ENCODE measurements at regions of chr1 and their contacts with region 1.

Region 1: GRCh38 chr1:238647877-238648276 is 738.5 kb upstream of the CHRM3 start:
- DNase-seq: no peak
- H3K4me3 ChIP-seq: no peak overlapping the region
- H3K27ac ChIP-seq: no peak overlapping the region
- H3K4me1 ChIP-seq: no peaks in the 10 kb centered on the region
- H3K27me3 ChIP-seq: no peaks in the 10 kb centered on the region
- CTCF ChIP-seq: no peak
- POLR2A ChIP-seq: no peak

Region 2: GRCh38 chr1:239233626-239234025 is 585.7 kb after region 1 on chr1:
- intact Hi-C with region 1: loop called (anchors 5 kb)
- DNase-seq: no peak
- H3K4me3 ChIP-seq: no peak overlapping the region
- H3K27ac ChIP-seq: no peak overlapping the region
- H3K4me1 ChIP-seq: no peaks in the 10 kb centered on the region
- H3K27me3 ChIP-seq: no peaks in the 10 kb centered on the region
- CTCF ChIP-seq: no peak
- POLR2A ChIP-seq: no peak